Activated T-helper 2 cell treated with anti-CD3 and anti-CD28 coated beads, Interferon-gamma antibody, Interleukin-2, Interleukin-4, amounts not matched to agents 10 μg/mL and 5 μg/mL and 100 μg/mL, durations not matched to agents 14 hours and 24 hours and 36 hours (primary cell): ENCODE measurements at regions of chr19 and their contacts with region 1.

Region 1: GRCh38 chr19:18571564-18572300 is at the start of gene UBA52:
- DNase-seq: peak; percentile 99
- H3K4me3 Mint-ChIP-seq: peak within 1 kb of the TSS; percentile 90
- H3K27ac Mint-ChIP-seq: peak within 1 kb of the TSS; percentile 91
- H3K4me1 Mint-ChIP-seq: peaks cover 13% of the 10 kb centered on the region
- H3K27me3 Mint-ChIP-seq: no peaks in the 10 kb centered on the region
- total RNA-seq, gene UBA52: 1,564 and 1,579 TPM in 2 replicates

Region 2: DNA sequence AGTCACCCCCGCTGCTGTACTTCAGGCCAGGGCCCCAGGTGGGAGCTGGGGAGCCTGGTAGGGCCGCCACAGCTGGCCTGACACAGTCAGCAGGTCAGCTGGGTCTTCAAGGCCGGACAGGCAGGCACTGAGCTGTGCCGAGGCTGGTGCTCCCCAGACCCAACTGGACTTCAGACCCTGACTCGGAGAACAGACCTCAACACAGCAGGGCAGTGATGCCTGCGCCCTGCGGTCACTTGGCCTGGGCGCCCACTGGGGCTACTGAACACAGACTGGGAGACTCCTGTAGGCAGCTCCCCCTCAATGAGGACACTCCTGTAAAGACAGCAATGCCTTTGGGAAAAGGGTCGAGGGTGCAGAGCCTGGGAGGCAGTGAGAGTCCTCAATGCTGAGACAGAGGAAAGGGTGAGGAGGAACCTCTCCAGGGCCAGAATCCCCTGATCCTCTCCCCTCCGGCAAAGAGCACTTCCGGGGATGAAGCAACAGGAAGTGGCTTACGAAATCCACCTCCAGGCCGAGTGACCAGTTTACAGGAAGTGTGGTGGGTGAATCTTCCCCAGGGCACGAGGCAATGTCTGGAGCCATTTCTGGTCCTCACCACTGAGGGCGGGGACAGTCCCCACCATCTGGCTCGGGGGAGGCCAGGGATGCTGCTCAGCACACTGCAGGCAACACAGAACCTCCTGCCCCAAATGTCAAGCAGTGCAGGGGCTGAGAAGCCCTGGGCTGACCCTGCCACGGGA is 93.0 kb before region 1 on chr19:
- intact Hi-C with region 1: loop called (anchors 5 kb)
- DNase-seq: peak; percentile 46
- H3K4me3 Mint-ChIP-seq: peak overlapping the region; percentile 69
- H3K27ac Mint-ChIP-seq: peak overlapping the region; percentile 94
- H3K4me1 Mint-ChIP-seq: peaks cover 74% of the 10 kb centered on the region
- H3K27me3 Mint-ChIP-seq: no peaks in the 10 kb centered on the region

Region 3: DNA sequence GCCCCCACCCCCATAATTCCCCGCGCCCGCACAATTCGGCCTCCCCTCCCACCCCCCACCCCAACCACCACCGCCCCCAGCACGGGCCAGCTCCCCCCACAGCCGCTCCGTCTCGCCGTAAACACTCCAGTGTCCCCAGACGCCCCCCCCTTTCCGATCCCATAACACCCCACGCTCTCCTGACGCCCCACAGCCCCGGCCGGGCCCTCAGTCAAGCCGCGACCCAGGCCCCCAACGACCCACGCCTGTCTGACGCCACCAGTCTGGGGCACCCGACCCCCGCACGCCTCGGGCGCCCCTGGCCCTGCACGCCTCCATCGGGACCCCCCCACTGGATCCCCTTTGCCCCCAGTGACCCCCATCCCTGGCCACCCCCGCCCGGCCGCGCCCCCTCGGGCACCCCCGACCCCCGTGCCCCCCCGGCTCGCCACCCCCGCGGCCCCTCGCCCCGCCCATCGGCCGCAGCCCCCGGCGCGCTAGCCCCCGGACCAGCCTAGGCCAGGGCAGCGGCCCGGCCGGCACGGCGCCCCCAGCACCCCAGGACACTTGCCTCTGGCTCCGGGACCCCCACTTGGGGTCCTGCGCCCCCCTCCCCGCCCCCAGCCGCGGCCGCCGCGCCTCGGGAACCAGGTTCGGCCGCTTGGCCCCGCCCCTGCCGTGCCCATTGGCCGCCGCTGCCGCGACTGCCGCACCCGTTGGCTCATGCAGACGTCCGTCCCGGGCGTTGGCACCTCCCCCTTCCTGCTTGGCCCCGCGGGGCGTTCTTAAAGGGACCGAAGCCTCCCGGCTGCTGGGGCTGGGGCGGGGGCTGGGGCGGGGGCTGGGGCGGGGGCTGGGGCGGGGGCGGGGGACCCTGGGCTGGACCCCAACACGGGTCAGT is 28.6 kb before region 1 on chr19 and contains the start of gene FKBP8:
- intact Hi-C with region 1: loop called (anchors 1 kb)
- DNase-seq: peak; percentile 91
- H3K4me3 Mint-ChIP-seq: peak within 1 kb of the TSS; percentile 95
- H3K27ac Mint-ChIP-seq: peak within 1 kb of the TSS; percentile 99
- H3K4me1 Mint-ChIP-seq: peaks cover 14% of the 10 kb centered on the region
- H3K27me3 Mint-ChIP-seq: no peaks in the 10 kb centered on the region
- total RNA-seq, gene FKBP8: 196 and 201 TPM in 2 replicates

Region 4: GRCh38 chr19:18557474-18558201 is 14.1 kb before region 1 on chr19 and contains the start of gene KXD1:
- intact Hi-C with region 1: loop called (anchors 2 kb)
- DNase-seq: peak; percentile 99
- H3K4me3 Mint-ChIP-seq: peak within 1 kb of the TSS; percentile 93
- H3K27ac Mint-ChIP-seq: peak within 1 kb of the TSS; percentile 96
- H3K4me1 Mint-ChIP-seq: peaks cover 16% of the 10 kb centered on the region
- H3K27me3 Mint-ChIP-seq: no peaks in the 10 kb centered on the region
- total RNA-seq, gene KXD1: 132 and 141 TPM in 2 replicates

Region 5: GRCh38 chr19:18588611-18589379 is 17.1 kb after region 1 on chr19 and contains the start of gene REX1BD:
- intact Hi-C with region 1: loop called (anchors 1 kb)
- DNase-seq: peak; percentile 86
- H3K4me3 Mint-ChIP-seq: peak within 1 kb of the TSS; percentile 84
- H3K27ac Mint-ChIP-seq: peak within 1 kb of the TSS; percentile 93
- H3K4me1 Mint-ChIP-seq: peaks cover 31% of the 10 kb centered on the region
- H3K27me3 Mint-ChIP-seq: no peaks in the 10 kb centered on the region
- total RNA-seq, gene REX1BD: 122 and 132 TPM in 2 replicates

Region 6: GRCh38 chr19:18644196-18645034 is 72.7 kb after region 1 on chr19:
- intact Hi-C with region 1: no loop called
- DNase-seq: no peak
- H3K4me3 Mint-ChIP-seq: no peak overlapping the region
- H3K27ac Mint-ChIP-seq: no peak overlapping the region
- H3K4me1 Mint-ChIP-seq: peaks cover 6% of the 10 kb centered on the region
- H3K27me3 Mint-ChIP-seq: no peaks in the 10 kb centered on the region

Region 7: GRCh38 chr19:18919086-18919899 is 347.6 kb after region 1 on chr19 and contains the starts of genes COPE and DDX49:
- intact Hi-C with region 1: loop called (anchors 1 kb)
- DNase-seq: peak; percentile 98
- H3K4me3 Mint-ChIP-seq: peak within 1 kb of the TSS; percentile 96
- H3K27ac Mint-ChIP-seq: peak within 1 kb of the TSS; percentile 94
- H3K4me1 Mint-ChIP-seq: peaks cover 19% of the 10 kb centered on the region
- H3K27me3 Mint-ChIP-seq: no peaks in the 10 kb centered on the region
- total RNA-seq, gene COPE: 231 and 240 TPM in 2 replicates
- total RNA-seq, gene DDX49: 75.2 and 77.5 TPM in 2 replicates